AG04450 (cell line): ENCODE measurements at regions of chr11 and their contacts with region 1.

Region 1: GRCh38 chr11:134207538-134208239 is 16.1 kb downstream of the NCAPD3 start:
- DNase-seq: no peak
- H3K4me3 ChIP-seq: no peak overlapping the region
- H3K27ac ChIP-seq: no peak overlapping the region
- H3K27me3 ChIP-seq: no peaks in the 10 kb centered on the region
- CTCF ChIP-seq: peak; percentile 63

Region 2: GRCh38 chr11:134014511-134014910 is 193.2 kb before region 1 on chr11:
- CTCF ChIA-PET with region 1: no interaction called
- POLR2A ChIA-PET with region 1: no interaction called
- DNase-seq: no peak
- H3K4me3 ChIP-seq: no peak overlapping the region
- H3K27ac ChIP-seq: no peak overlapping the region
- H3K27me3 ChIP-seq: peaks cover 16% of the 10 kb centered on the region
- CTCF ChIP-seq: peak; percentile 40

Region 3: GRCh38 chr11:134196756-134197155 is 10.9 kb before region 1 on chr11:
- CTCF ChIA-PET with region 1: interaction called, 21 read pairs
- POLR2A ChIA-PET with region 1: no interaction called
- DNase-seq: no peak
- H3K4me3 ChIP-seq: no peak overlapping the region
- H3K27ac ChIP-seq: no peak overlapping the region
- H3K27me3 ChIP-seq: no peaks in the 10 kb centered on the region
- CTCF ChIP-seq: no peak

Region 4: GRCh38 chr11:134236834-134237556 is 29.3 kb after region 1 on chr11:
- CTCF ChIA-PET with region 1: no interaction called
- POLR2A ChIA-PET with region 1: no interaction called
- DNase-seq: no peak
- H3K4me3 ChIP-seq: no peak overlapping the region
- H3K27ac ChIP-seq: no peak overlapping the region
- H3K27me3 ChIP-seq: no peaks in the 10 kb centered on the region
- CTCF ChIP-seq: no peak